Heart left ventricle (tissue), 16 donors: ENCODE measurements at regions of chr18 and their contacts with region 1.

Region 1: GRCh38 chr18:35415511-35416073 is 38.5 kb upstream of the ZNF396 start:
- DNase-seq: no peak
- ATAC-seq: peak in 1 of 4 donors; percentile 17
- H3K4me3 ChIP-seq: peak overlapping the region in 1 of 12 donors; percentile 33
- H3K27ac ChIP-seq: peak overlapping the region in 2 of 12 donors; percentile 10 to 60
- H3K4me1 ChIP-seq: peaks cover 0 to 24% (median 0%) of the 10 kb centered on the region in 12 donors
- H3K27me3 ChIP-seq: no peaks in the 10 kb centered on the region
- CTCF ChIP-seq: no peak
- POLR2A ChIP-seq: no peak

Region 2: DNA sequence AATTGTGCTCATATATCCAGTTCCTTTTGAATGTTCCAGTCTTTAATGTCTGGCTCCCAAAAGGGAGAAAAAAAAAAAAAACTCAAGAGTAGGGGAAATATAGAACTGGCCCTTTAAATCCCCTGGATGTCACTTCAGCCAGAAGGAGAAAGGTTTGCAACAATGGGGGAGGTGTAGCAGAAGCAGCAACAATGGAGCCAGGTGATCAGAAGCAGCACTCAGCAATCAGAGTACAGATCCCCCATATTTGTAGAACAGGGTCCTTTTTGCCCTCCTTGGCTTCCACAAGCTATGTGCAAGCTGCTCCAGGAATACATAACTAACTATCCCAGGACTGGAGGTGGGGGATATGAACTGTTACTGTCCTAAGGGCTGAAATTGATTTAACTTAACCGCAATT is 200.6 kb before region 1 on chr18:
- intact Hi-C with region 1: no loop called
- DNase-seq: no peak
- ATAC-seq: no peak
- H3K4me3 ChIP-seq: no peak overlapping the region
- H3K27ac ChIP-seq: no peak overlapping the region
- H3K4me1 ChIP-seq: no peaks in the 10 kb centered on the region
- H3K27me3 ChIP-seq: no peaks in the 10 kb centered on the region
- CTCF ChIP-seq: no peak
- POLR2A ChIP-seq: no peak

Region 3: GRCh38 chr18:35397976-35398375 is 17.6 kb before region 1 on chr18:
- intact Hi-C with region 1: no loop called
- DNase-seq: no peak
- ATAC-seq: no peak
- H3K4me3 ChIP-seq: no peak overlapping the region
- H3K27ac ChIP-seq: no peak overlapping the region
- H3K4me1 ChIP-seq: no peaks in the 10 kb centered on the region
- H3K27me3 ChIP-seq: peaks cover 0 to 4% (median 0%) of the 10 kb centered on the region in 9 donors
- CTCF ChIP-seq: no peak
- POLR2A ChIP-seq: no peak

Region 4: GRCh38 chr18:35688757-35689156 is 273.2 kb after region 1 on chr18:
- intact Hi-C with region 1: loop called in 1 of 10 experiments (anchors 10 kb)
- DNase-seq: no peak
- ATAC-seq: no peak
- H3K4me3 ChIP-seq: no peak overlapping the region
- H3K27ac ChIP-seq: no peak overlapping the region
- H3K4me1 ChIP-seq: no peaks in the 10 kb centered on the region
- H3K27me3 ChIP-seq: no peaks in the 10 kb centered on the region
- CTCF ChIP-seq: no peak
- POLR2A ChIP-seq: no peak

Region 5: DNA sequence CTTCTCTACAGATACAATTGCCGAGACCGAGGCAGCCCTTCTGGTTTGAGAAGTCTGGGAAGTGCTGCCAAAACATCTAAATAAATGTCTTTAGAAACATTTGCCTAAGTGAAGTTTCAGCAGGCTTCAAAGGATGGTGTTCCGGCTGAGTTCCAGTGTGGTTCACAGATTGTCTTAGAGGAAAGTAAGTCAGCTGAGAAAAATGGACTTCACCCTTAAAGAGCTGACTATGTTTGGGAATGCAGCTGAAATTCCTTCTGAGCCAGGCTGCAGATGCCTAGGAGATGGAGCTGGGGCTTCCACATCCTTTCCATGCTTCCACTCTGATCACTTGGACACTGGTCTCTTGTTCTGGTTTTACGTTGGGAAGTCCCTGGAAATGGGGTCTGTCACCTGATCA is 965.5 kb after region 1 on chr18:
- intact Hi-C with region 1: no loop called
- DNase-seq: no peak
- ATAC-seq: no peak
- H3K4me3 ChIP-seq: no peak overlapping the region
- H3K27ac ChIP-seq: peak overlapping the region in 8 of 12 donors; percentile 32 to 87 (median 66)
- H3K4me1 ChIP-seq: peaks cover 0 to 83% (median 17%) of the 10 kb centered on the region in 12 donors
- H3K27me3 ChIP-seq: no peaks in the 10 kb centered on the region
- CTCF ChIP-seq: no peak
- POLR2A ChIP-seq: no peak